ENCODE measurements at regions of chr10 and their contacts with region 1.

Region 1: DNA sequence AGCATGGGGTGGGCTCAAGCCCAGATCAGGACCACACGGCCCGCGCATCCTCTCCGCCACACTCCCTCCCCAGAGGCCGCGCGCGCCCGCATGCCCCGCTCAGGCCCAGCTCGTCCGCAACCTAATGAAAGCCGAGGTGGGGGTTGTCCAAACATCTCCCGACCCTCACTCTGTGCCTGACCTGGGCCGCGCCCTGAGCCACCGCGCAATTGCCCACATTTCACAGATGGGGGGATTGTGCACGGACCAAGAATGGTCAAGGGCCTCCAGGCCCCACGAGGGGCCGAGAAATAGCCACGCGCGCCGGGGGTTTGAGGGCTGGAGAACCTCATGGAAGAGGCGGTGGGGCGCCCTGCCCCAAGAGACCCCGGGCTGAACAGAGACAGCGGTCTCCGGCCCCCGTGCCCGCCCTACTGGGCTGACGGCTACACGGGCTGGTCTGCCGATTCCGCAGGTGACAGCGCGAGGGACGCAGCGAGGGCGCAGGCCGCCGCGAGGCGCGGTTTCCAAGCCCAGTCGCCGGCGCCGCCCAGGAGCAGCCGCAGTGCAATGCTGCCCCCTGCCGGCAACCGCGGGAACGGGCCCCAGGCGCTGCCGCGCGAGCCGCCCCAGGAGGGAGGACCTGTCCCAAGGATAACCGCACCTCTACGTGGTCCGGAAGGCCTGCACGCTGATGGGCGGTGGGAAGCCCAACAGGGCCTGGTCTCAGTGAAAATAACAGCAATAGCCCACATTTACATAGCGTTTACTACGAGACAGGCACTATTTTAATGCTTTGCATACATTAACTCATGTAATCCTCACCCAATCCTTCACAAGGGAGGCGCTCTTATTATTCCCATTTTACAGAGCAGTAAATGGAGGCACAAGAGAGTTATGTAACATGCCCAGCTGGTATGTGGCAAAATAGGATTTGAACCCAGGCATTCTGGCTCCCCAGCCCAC is 10.5 kb upstream of the GRID1 start:
- DNase-seq: peak; percentile 78
- H3K4me3 ChIP-seq: no peak overlapping the region
- H3K27ac ChIP-seq: no peak overlapping the region
- H3K4me1 ChIP-seq: peaks cover 5% of the 10 kb centered on the region
- H3K27me3 ChIP-seq: no peaks in the 10 kb centered on the region
- CTCF ChIP-seq: peak; percentile 99

Region 2: DNA sequence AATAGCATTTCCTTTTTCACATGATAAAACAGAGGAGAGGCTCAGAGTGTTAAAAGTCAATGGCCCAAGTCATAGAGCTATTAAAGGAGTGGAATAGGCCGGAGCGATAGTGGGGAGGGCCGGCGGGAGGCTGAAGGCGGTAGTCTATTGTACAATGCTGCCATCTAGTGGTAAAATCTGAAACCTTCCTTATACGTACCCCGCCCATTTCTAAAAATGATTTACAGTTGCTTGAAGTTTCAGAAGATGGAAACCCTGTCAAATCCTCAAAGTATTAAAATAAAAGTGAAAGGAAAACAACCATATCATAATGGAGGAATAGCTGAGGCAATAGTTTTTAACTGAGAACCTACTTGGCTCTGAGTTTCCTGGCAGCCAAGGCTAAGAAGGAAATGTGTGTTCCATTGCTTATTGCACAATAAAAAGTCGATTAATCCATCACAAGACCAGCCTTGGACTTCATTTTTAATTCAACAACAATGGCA is 1839.6 kb before region 1 on chr10:
- intact Hi-C with region 1: loop called (anchors 5 kb)
- DNase-seq: peak; percentile 45
- H3K4me3 ChIP-seq: no peak overlapping the region
- H3K27ac ChIP-seq: no peak overlapping the region
- H3K4me1 ChIP-seq: peaks cover 5% of the 10 kb centered on the region
- H3K27me3 ChIP-seq: peaks cover 6% of the 10 kb centered on the region
- CTCF ChIP-seq: peak; percentile 65

Region 3: GRCh38 chr10:85548034-85548433 is 829.1 kb before region 1 on chr10:
- intact Hi-C with region 1: loop called (anchors 10 kb)
- DNase-seq: peak; percentile 36
- H3K4me3 ChIP-seq: no peak overlapping the region
- H3K27ac ChIP-seq: no peak overlapping the region
- H3K4me1 ChIP-seq: no peaks in the 10 kb centered on the region
- H3K27me3 ChIP-seq: no peaks in the 10 kb centered on the region
- CTCF ChIP-seq: peak; percentile 41

Region 4: GRCh38 chr10:85995791-85996190 is 381.3 kb before region 1 on chr10:
- intact Hi-C with region 1: loop called (anchors 10 kb)
- DNase-seq: peak; percentile 20
- H3K4me3 ChIP-seq: no peak overlapping the region
- H3K27ac ChIP-seq: no peak overlapping the region
- H3K4me1 ChIP-seq: no peaks in the 10 kb centered on the region
- H3K27me3 ChIP-seq: no peaks in the 10 kb centered on the region
- CTCF ChIP-seq: no peak

Region 5: DNA sequence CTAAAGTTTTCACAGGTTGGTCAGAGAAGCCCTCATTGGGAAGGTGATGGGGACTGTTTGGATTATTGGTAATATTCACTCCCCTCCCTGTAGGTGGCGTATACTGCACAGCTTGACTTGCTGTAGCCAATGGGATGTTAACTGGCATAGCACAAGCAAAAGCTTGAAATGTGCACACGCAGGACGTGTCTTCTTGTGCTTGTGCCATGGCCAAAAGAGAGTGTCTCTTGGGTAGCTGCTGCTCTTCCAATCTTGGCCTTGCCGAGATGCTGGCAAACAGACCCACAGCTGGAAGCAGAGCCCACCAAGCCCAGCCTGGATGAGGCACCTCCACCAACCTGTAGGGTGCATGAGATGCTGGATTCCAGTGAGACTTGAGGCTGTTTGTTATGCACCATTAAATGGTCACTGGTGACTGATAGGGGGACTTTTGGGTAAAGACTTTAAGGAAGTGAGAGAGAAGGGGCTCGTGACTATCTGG is 276.5 kb before region 1 on chr10:
- intact Hi-C with region 1: loop called (anchors 5 kb)
- DNase-seq: no peak
- H3K4me3 ChIP-seq: no peak overlapping the region
- H3K27ac ChIP-seq: no peak overlapping the region
- H3K4me1 ChIP-seq: no peaks in the 10 kb centered on the region
- H3K27me3 ChIP-seq: no peaks in the 10 kb centered on the region
- CTCF ChIP-seq: peak; percentile 30

Measured in colonic mucosa (tissue), 4 donors.